Heart left ventricle (tissue), 16 donors: ENCODE measurements at regions of chr16 and their contacts with region 1.

Region 1: DNA sequence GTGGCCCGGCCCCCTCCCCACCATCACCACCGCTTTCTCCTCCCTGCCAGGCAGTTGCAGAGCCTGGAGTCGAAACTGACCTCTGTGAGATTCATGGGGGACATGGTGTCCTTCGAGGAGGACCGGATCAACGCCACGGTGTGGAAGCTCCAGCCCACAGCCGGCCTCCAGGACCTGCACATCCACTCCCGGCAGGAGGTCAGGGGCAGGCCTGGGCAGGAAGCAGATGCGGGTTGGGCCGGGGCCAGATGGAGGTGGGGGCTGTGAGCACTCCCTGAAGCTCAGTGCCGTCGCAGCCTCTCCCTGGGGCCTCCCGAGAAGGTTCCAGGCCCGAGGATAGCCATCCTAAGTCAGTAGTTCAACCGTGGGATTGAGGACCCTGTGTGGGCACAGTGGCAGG is 14.2 kb upstream of the ADGRG3 start:
- DNase-seq: peak in 1 of 5 donors; percentile 48
- ATAC-seq: peak in 1 of 4 donors; percentile 76
- H3K4me3 ChIP-seq: no peak overlapping the region
- H3K27ac ChIP-seq: peak overlapping the region in 3 of 12 donors; percentile 18 to 54 (median 34)
- H3K4me1 ChIP-seq: peaks cover 0 to 10% (median 0%) of the 10 kb centered on the region in 12 donors
- H3K27me3 ChIP-seq: no peaks in the 10 kb centered on the region
- CTCF ChIP-seq: no peak
- POLR2A ChIP-seq: no peak

Region 2: DNA sequence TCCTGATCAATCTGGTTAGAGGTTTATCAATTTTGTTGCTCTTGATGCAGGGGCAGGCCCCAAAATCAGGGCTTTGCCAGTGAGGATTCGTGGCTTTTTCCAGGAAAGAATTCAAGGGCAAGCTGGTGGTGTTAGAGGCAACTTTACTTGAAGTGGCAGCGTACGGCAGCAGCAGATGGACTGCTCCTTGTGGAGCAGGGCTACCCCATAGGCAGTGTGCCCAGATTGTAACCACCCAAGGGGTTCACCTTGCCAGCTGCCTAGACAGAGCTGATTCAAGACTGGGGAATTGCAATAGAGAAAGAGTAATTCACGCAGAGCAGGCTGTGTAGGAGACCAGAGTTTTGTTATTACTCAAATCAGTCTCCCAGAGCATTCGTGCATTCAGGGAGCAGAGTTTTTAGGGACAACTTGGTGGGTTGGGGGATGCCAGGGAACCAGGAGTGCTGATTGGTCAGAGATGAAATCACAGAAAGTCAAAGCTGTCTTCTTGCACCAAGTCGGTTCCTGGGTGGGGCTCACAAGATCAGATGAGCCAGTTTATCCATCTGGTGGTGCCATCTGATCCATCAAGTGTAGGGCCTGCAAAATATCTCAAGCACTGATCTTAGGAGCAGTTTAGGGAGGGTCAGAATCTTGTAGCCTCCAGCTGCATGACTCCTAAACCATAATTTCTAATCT is 57.5 kb after region 1 on chr16:
- intact Hi-C with region 1: loop called in 2 of 10 experiments (anchors 5 to 10 kb)
- DNase-seq: no peak
- ATAC-seq: no peak
- H3K4me3 ChIP-seq: no peak overlapping the region
- H3K27ac ChIP-seq: no peak overlapping the region
- H3K4me1 ChIP-seq: no peaks in the 10 kb centered on the region
- H3K27me3 ChIP-seq: peaks cover 0 to 2% (median 0%) of the 10 kb centered on the region in 9 donors
- CTCF ChIP-seq: no peak
- POLR2A ChIP-seq: no peak

Region 3: GRCh38 chr16:57976331-57976796 is 322.4 kb after region 1 on chr16:
- intact Hi-C with region 1: no loop called
- DNase-seq: peak in 2 of 5 donors; percentile 30 to 33
- ATAC-seq: peak; percentile 82 to 94 (median 92)
- H3K4me3 ChIP-seq: no peak overlapping the region
- H3K27ac ChIP-seq: peak overlapping the region in 1 of 12 donors; percentile 39
- H3K4me1 ChIP-seq: peaks cover 0 to 13% (median 0%) of the 10 kb centered on the region in 12 donors
- H3K27me3 ChIP-seq: no peaks in the 10 kb centered on the region
- CTCF ChIP-seq: no peak
- POLR2A ChIP-seq: no peak